Activated naive CD4-positive, alpha-beta T cell treated with anti-CD3 and anti-CD28 coated beads for 36 hours (primary cell): ENCODE measurements at regions of chr7 and their contacts with region 1.

Region 1: DNA sequence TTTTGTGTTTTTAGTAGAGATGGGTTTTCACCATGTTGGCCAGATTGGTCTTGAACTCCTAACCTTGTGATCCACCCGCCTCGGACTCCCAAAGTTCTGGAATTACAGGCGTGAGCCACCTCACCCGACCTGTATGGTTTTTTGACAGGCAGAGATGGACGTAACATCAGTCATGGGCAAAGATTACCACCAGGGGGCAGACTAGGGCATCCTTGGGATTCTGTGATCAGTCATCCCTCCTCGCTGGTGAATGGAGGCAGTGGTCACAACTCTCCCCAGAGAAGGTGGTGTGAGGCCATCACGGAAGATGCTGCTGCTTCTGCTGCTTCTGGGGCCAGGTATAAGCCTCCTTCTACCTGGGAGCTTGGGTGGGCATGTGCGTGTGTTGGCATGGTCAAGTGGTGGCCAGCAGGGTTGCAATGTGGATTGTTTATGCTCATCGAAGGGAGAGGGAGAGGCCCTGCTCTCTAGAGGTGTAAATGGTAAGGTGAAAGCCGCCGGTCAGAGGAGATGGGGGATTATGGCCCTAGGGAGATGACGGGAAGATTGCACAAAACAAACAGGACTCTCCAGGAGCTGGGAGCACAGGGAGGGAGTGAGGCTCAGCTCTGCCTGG is 122.7 kb upstream of the PRSS1 start:
- DNase-seq: peak; percentile 85
- H3K4me3 Mint-ChIP-seq: peak overlapping the region; percentile 77
- H3K27ac Mint-ChIP-seq: peak overlapping the region; percentile 85
- H3K4me1 Mint-ChIP-seq: peaks cover 5% of the 10 kb centered on the region
- H3K27me3 Mint-ChIP-seq: peaks cover 2% of the 10 kb centered on the region

Region 2: DNA sequence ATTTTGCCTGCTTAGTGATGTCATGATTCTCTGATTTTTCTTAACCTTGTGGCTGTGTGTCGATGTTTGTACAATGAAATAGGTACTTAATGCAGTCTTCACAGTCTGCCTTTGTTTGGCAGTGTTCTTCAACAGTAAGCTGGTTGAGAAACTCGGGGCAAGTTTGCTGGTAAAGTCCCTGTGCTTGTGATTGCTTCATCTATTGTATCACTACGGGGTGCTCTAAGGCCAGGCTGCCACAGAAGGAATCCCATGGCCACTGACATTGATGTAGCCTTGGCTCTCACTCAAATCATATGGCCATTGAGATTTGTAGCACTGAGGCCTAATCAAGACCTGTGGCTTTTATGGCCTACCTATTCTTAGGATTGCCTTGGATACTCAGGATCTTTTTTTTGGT is 751.7 kb before region 1 on chr7:
- CTCF ChIA-PET with region 1: no interaction called
- intact Hi-C with region 1: no loop called
- DNase-seq: no peak
- H3K4me3 Mint-ChIP-seq: no peak overlapping the region
- H3K27ac Mint-ChIP-seq: no peak overlapping the region
- H3K4me1 Mint-ChIP-seq: no peaks in the 10 kb centered on the region
- H3K27me3 Mint-ChIP-seq: peaks cover 2% of the 10 kb centered on the region

Region 3: GRCh38 chr7:142300689-142301088 is 325.8 kb before region 1 on chr7:
- CTCF ChIA-PET with region 1: no interaction called
- intact Hi-C with region 1: no loop called
- DNase-seq: peak; percentile 75
- H3K4me3 Mint-ChIP-seq: peak overlapping the region; percentile 33
- H3K27ac Mint-ChIP-seq: peak overlapping the region; percentile 54
- H3K4me1 Mint-ChIP-seq: peaks cover 30% of the 10 kb centered on the region
- H3K27me3 Mint-ChIP-seq: peaks cover 13% of the 10 kb centered on the region

Region 4: GRCh38 chr7:142603870-142604448 is 22.6 kb before region 1 on chr7:
- CTCF ChIA-PET with region 1: interaction called, 6 read pairs
- intact Hi-C with region 1: loop called (anchors 2 kb)
- DNase-seq: peak; percentile 71
- H3K4me3 Mint-ChIP-seq: no peak overlapping the region
- H3K27ac Mint-ChIP-seq: peak overlapping the region; percentile 68
- H3K4me1 Mint-ChIP-seq: peaks cover 6% of the 10 kb centered on the region
- H3K27me3 Mint-ChIP-seq: no peaks in the 10 kb centered on the region

Region 5: DNA sequence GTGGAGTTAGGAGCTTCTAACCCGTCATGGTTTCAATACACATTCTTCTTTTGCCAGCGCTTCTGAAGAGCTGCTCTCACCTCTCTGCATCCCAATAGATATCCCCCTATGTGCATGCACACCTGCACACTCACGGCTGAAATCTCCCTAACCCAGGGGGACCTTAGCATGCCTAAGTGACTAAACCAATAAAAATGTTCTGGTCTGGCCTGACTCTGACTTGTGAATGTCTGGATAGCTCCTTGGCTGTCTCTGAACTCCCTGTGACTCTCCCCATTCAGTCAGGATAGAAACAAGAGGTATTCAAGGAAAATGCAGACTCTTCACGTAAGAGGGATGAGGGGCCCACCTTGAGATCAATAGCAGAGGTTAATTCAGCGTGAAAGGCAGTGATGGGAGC is 166.6 kb after region 1 on chr7:
- CTCF ChIA-PET with region 1: no interaction called
- intact Hi-C with region 1: no loop called
- DNase-seq: no peak
- H3K4me3 Mint-ChIP-seq: peak overlapping the region; percentile 88
- H3K27ac Mint-ChIP-seq: peak overlapping the region; percentile 99
- H3K4me1 Mint-ChIP-seq: peaks cover 36% of the 10 kb centered on the region
- H3K27me3 Mint-ChIP-seq: no peaks in the 10 kb centered on the region